ENCODE measurements at regions of chr5 and their contacts with region 1.

Region 1: GRCh38 chr5:151740336-151740942 is 18.0 kb downstream of the ATOX1 start:
- DNase-seq: peak; percentile 83 to 86
- H3K4me3 ChIP-seq: no peak overlapping the region
- H3K27ac ChIP-seq: peak overlapping the region; percentile 84 to 93
- H3K4me1 ChIP-seq: peaks cover 4 to 12% of the 10 kb centered on the region in 2 donors
- H3K27me3 ChIP-seq: no peaks in the 10 kb centered on the region
- CTCF ChIP-seq: peak; percentile 80 to 93 (median 90)
- POLR2A ChIP-seq: no peak

Region 2: DNA sequence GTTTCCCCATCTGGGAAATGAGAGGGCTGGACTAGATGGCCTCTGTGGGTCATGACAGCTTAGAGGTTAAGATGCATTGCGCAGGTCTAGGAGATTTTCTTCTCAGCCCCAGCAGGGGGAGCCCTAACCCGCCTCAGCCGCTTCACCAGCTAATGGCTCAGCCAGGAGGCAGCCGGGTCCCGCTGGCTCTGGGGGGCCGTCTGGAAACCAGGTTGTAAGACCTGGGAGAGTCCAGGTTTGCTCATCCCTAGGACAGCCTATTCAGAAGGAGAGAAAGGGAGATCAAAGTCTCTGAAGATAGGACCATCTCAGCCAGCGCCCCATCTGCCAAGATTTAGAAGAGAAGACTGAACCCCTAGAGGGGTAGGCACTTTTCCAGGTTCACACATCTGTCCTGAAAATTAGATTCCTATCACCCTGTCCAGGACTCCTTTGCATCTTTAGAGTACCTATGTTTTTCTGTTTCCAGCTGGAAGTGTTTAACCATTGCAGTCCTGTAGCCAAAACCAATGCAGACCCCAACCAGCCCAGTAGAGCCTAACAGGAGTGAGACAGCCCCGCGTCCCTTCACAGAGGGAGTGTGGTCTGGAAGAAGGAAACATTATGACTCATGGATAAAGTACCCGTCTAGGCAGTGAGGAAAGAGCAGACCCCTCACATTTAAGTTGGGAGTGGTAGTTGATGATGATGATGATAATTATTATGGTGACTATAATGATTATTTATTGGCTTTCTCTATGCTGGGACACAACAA is 81.3 kb before region 1 on chr5:
- intact Hi-C with region 1: loop called (anchors 2 kb)
- DNase-seq: peak; percentile 84 to 91
- H3K4me3 ChIP-seq: no peak overlapping the region
- H3K27ac ChIP-seq: peak overlapping the region; percentile 68 to 100
- H3K4me1 ChIP-seq: peaks cover 4 to 7% of the 10 kb centered on the region in 2 donors
- H3K27me3 ChIP-seq: no peaks in the 10 kb centered on the region
- CTCF ChIP-seq: peak; percentile 93 to 96 (median 95)
- POLR2A ChIP-seq: no peak

Region 3: GRCh38 chr5:152104211-152104610 is 363.8 kb after region 1 on chr5:
- intact Hi-C with region 1: no loop called
- DNase-seq: no peak
- H3K4me3 ChIP-seq: no peak overlapping the region
- H3K27ac ChIP-seq: no peak overlapping the region
- H3K4me1 ChIP-seq: no peaks in the 10 kb centered on the region
- H3K27me3 ChIP-seq: no peaks in the 10 kb centered on the region
- CTCF ChIP-seq: no peak
- POLR2A ChIP-seq: no peak